ENCODE measurements at regions of chr13 and their contacts with region 1.

Region 1: DNA sequence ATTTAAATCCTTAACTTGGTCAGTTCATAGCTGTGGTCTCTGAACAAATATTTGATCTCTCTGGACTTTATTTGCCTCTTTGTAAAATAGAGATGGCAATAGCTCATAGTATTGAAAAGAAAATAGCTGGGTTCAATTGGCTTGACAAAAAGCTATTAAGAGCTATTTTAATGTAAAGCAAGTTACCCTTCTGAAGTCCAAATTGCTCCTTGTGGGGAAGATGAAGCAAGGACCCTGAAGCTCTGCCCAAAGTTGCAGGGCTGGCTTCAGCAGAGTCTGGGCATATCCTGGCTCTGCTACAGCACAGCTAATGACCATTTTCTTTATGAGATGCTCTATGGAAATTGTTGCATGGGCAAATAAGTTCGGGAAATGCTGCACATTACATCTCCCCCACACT is 484.5 kb downstream of the TDRD3 start:
- DNase-seq: no peak
- ATAC-seq: no peak
- H3K4me3 ChIP-seq: no peak overlapping the region
- H3K27ac ChIP-seq: no peak overlapping the region
- H3K4me1 ChIP-seq: no peaks in the 10 kb centered on the region
- H3K27me3 ChIP-seq: no peaks in the 10 kb centered on the region
- CTCF ChIP-seq: no peak
- EP300 ChIP-seq: no peak
- POLR2A ChIP-seq: no peak
- RAD21 ChIP-seq: no peak

Region 2: GRCh38 chr13:61247149-61247936 is 365.8 kb after region 1 on chr13:
- CTCF ChIA-PET with region 1: no interaction called
- POLR2A ChIA-PET with region 1: no interaction called
- in situ Hi-C with region 1: no loop called
- intact Hi-C with region 1: loop called (anchors 5 kb)
- DNase-seq: no peak
- ATAC-seq: peak; percentile 56
- H3K4me3 ChIP-seq: no peak overlapping the region
- H3K27ac ChIP-seq: no peak overlapping the region
- H3K4me1 ChIP-seq: no peaks in the 10 kb centered on the region
- H3K27me3 ChIP-seq: no peaks in the 10 kb centered on the region
- CTCF ChIP-seq: no peak
- EP300 ChIP-seq: no peak
- POLR2A ChIP-seq: no peak
- RAD21 ChIP-seq: no peak